ENCODE measurements at regions of chr1 and their contacts with region 1.

Region 1: GRCh38 chr1:185156854-185157598 is at the starts of genes SWT1 and TRMT1L:
- DNase-seq: peak; percentile 99
- H3K4me3 ChIP-seq: peak within 1 kb of the TSS; percentile 87 to 94 (median 89)
- H3K27ac ChIP-seq: peak within 1 kb of the TSS; percentile 75
- H3K4me1 ChIP-seq: peaks cover 20% of the 10 kb centered on the region
- H3K27me3 ChIP-seq: no peaks in the 10 kb centered on the region
- CTCF ChIP-seq: no peak
- total RNA-seq, gene SWT1: 2.4 to 4.8 TPM
- total RNA-seq, gene TRMT1L: 17.0 to 23.0 TPM

Region 2: GRCh38 chr1:184755226-184756065 is 401.6 kb before region 1 on chr1:
- CTCF ChIA-PET with region 1: no interaction called
- dilution Hi-C with region 1: no loop called
- in situ Hi-C with region 1: no loop called
- intact Hi-C with region 1: loop called (anchors 1 kb)
- DNase-seq: no peak
- H3K4me3 ChIP-seq: peak overlapping the region; percentile 69 to 100 (median 86)
- H3K27ac ChIP-seq: peak overlapping the region; percentile 66
- H3K4me1 ChIP-seq: peaks cover 5% of the 10 kb centered on the region
- H3K27me3 ChIP-seq: no peaks in the 10 kb centered on the region
- CTCF ChIP-seq: no peak

Region 3: GRCh38 chr1:185044981-185045813 is 111.8 kb before region 1 on chr1 and contains the start of gene RNF2:
- CTCF ChIA-PET with region 1: no interaction called
- dilution Hi-C with region 1: no loop called
- in situ Hi-C with region 1: no loop called
- intact Hi-C with region 1: loop called (anchors 2 kb)
- DNase-seq: peak; percentile 68
- H3K4me3 ChIP-seq: peak within 1 kb of the TSS; percentile 69 to 96 (median 84)
- H3K27ac ChIP-seq: peak within 1 kb of the TSS; percentile 56
- H3K4me1 ChIP-seq: peaks cover 14% of the 10 kb centered on the region
- H3K27me3 ChIP-seq: no peaks in the 10 kb centered on the region
- CTCF ChIP-seq: no peak
- total RNA-seq, gene RNF2: 25.5 to 29.3 TPM

Region 4: DNA sequence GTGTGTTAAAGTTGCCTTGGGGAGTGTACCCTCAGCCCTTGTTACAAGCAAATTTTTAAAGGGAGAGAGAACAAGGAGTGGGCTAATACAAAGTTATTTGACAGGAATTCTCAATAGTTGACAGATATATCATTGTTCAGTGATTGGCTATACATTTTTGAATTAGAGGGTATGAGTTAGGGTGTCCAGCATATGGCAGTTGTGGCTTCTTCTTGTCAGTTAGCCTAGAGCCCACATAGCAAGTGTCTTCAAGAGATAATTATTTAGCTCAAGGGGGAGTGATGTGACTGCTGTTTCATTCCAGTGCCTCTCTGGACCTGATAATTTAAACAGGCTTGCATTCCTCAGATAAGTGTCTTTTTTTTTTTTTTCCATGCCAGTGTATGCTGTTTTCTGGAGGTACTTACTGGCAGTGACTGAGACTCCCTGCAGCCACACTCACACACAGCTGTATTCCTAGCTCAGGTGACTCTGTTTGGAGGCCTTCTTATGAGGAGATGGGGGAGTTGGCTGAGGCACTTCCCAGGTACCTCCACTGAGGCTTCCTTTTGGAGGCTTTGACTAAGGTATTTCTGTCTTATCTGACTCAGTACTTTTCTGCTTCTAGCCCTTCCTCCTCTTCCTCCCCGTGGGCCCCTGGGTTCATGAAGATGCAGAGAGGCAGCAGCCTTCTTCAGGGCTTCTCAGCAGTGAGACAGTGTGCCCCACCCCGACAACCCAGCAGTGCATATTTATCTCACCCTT is 127.7 kb after region 1 on chr1:
- CTCF ChIA-PET with region 1: no interaction called
- dilution Hi-C with region 1: no loop called
- in situ Hi-C with region 1: no loop called
- intact Hi-C with region 1: no loop called
- DNase-seq: no peak
- H3K4me3 ChIP-seq: no peak overlapping the region
- H3K27ac ChIP-seq: no peak overlapping the region
- H3K4me1 ChIP-seq: no peaks in the 10 kb centered on the region
- H3K27me3 ChIP-seq: no peaks in the 10 kb centered on the region
- CTCF ChIP-seq: no peak